CD8-positive, alpha-beta T cell (primary cell): ENCODE measurements at regions of chr12 and their contacts with region 1.

Region 1: DNA sequence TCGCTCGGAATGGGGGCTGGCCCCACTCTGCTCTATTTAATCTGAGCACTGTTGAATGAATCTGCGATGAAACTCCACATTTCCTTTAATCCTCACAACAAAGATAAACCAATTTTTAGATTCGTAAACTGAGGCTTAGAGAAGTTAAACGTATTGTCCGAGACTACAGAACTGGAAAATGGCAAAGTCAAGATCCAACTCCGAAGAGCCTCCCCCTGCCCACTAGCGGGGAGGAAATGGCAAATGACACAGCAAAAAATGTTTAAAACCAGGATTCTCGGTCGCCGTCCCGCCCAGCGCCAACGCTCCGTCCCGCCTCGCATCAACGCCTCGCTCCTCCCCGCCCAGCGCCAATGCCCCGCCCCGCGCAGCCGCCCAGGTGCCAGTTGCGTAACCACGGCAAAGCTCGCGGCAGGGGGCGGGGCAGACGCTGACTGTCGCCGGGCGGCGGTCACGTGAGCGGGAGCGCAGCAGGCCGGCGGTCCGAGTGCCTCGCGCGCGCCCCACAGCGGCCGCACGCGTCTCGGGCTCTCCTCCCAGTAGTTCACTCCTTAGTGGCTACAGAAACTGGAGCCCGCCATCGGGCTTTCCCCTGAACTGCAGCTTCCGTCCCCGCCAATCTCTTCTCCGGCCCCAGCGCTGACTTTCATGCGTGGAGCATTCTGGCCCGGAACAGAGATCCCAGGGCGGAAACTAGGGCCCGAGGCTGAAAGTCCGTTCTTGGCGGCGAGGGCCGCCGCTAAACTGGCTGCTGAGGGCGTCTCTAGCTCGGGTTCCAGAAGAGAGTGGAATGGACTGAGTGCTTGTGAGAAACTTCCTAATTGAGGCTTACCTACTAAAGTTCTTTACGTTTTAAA is 13.6 kb upstream of the LRRC23 start:
- DNase-seq: peak; percentile 97 to 100 (median 99)
- ATAC-seq: peak; percentile 94
- H3K4me3 ChIP-seq: peak overlapping the region; percentile 64 to 70
- H3K4me3 Mint-ChIP-seq: peak overlapping the region; percentile 80
- H3K27ac ChIP-seq: peak overlapping the region; percentile 64 to 97
- H3K27ac Mint-ChIP-seq: peak overlapping the region; percentile 90
- H3K4me1 ChIP-seq: peaks cover 11% of the 10 kb centered on the region
- H3K4me1 Mint-ChIP-seq: peaks cover 16% of the 10 kb centered on the region
- H3K27me3 ChIP-seq: no peaks in the 10 kb centered on the region
- H3K27me3 Mint-ChIP-seq: no peaks in the 10 kb centered on the region
- CTCF ChIP-seq: peak; percentile 86

Region 2: GRCh38 chr12:5328669-5329517 is 1562.1 kb before region 1 on chr12:
- CTCF ChIA-PET with region 1: no interaction called
- POLR2A ChIA-PET with region 1: no interaction called
- intact Hi-C with region 1: no loop called
- DNase-seq: no peak
- ATAC-seq: no peak
- H3K4me3 ChIP-seq: no peak overlapping the region
- H3K4me3 Mint-ChIP-seq: no peak overlapping the region
- H3K27ac ChIP-seq: no peak overlapping the region
- H3K27ac Mint-ChIP-seq: no peak overlapping the region
- H3K4me1 ChIP-seq: no peaks in the 10 kb centered on the region
- H3K4me1 Mint-ChIP-seq: no peaks in the 10 kb centered on the region
- H3K27me3 ChIP-seq: no peaks in the 10 kb centered on the region
- H3K27me3 Mint-ChIP-seq: peaks cover 2% of the 10 kb centered on the region
- CTCF ChIP-seq: no peak

Region 3: GRCh38 chr12:6904280-6905278 is 13.6 kb after region 1 on chr12 and contains the start of gene LRRC23:
- CTCF ChIA-PET with region 1: interaction called, 40 read pairs
- POLR2A ChIA-PET with region 1: interaction called, 7 read pairs
- intact Hi-C with region 1: loop called (anchors 1 kb)
- DNase-seq: peak; percentile 92 to 99 (median 97)
- ATAC-seq: peak; percentile 96
- H3K4me3 ChIP-seq: peak within 1 kb of the TSS; percentile 56 to 64
- H3K4me3 Mint-ChIP-seq: peak within 1 kb of the TSS; percentile 5
- H3K27ac ChIP-seq: peak within 1 kb of the TSS; percentile 86 to 88
- H3K27ac Mint-ChIP-seq: no peak within 1 kb of the TSS
- H3K4me1 ChIP-seq: peaks cover 15% of the 10 kb centered on the region
- H3K4me1 Mint-ChIP-seq: no peaks in the 10 kb centered on the region
- H3K27me3 ChIP-seq: no peaks in the 10 kb centered on the region
- H3K27me3 Mint-ChIP-seq: no peaks in the 10 kb centered on the region
- CTCF ChIP-seq: no peak
- total RNA-seq, gene LRRC23: 6.5 to 7.2 TPM

Region 4: GRCh38 chr12:6914246-6914946 is 23.4 kb after region 1 on chr12 and contains the start of gene ENO2:
- CTCF ChIA-PET with region 1: interaction called, 17 read pairs
- POLR2A ChIA-PET with region 1: interaction called, 6 read pairs
- intact Hi-C with region 1: loop called (anchors 1 kb)
- DNase-seq: peak; percentile 59 to 92 (median 89)
- ATAC-seq: peak; percentile 94
- H3K4me3 ChIP-seq: peak within 1 kb of the TSS; percentile 52 to 83
- H3K4me3 Mint-ChIP-seq: peak within 1 kb of the TSS; percentile 95
- H3K27ac ChIP-seq: peak within 1 kb of the TSS; percentile 77 to 88
- H3K27ac Mint-ChIP-seq: peak within 1 kb of the TSS; percentile 95
- H3K4me1 ChIP-seq: peaks cover 18% of the 10 kb centered on the region
- H3K4me1 Mint-ChIP-seq: peaks cover 31% of the 10 kb centered on the region
- H3K27me3 ChIP-seq: no peaks in the 10 kb centered on the region
- H3K27me3 Mint-ChIP-seq: no peaks in the 10 kb centered on the region
- CTCF ChIP-seq: no peak
- total RNA-seq, gene ENO2: 95.5 to 99.6 TPM

Region 5: GRCh38 chr12:6937481-6938297 is 46.7 kb after region 1 on chr12:
- CTCF ChIA-PET with region 1: interaction called, 5 read pairs
- POLR2A ChIA-PET with region 1: no interaction called
- intact Hi-C with region 1: loop called in 1 of 2 experiments (anchors 1 kb)
- DNase-seq: peak; percentile 84 to 99 (median 92)
- ATAC-seq: peak; percentile 91
- H3K4me3 ChIP-seq: peak overlapping the region; percentile 60 to 91
- H3K4me3 Mint-ChIP-seq: peak overlapping the region; percentile 83
- H3K27ac ChIP-seq: peak overlapping the region; percentile 89 to 91
- H3K27ac Mint-ChIP-seq: peak overlapping the region; percentile 96
- H3K4me1 ChIP-seq: peaks cover 25% of the 10 kb centered on the region
- H3K4me1 Mint-ChIP-seq: peaks cover 48% of the 10 kb centered on the region
- H3K27me3 ChIP-seq: no peaks in the 10 kb centered on the region
- H3K27me3 Mint-ChIP-seq: no peaks in the 10 kb centered on the region
- CTCF ChIP-seq: peak; percentile 90

Region 6: GRCh38 chr12:6944381-6945186 is 53.6 kb after region 1 on chr12:
- CTCF ChIA-PET with region 1: no interaction called
- POLR2A ChIA-PET with region 1: interaction called, 14 read pairs
- intact Hi-C with region 1: no loop called
- DNase-seq: peak; percentile 67 to 94 (median 89)
- ATAC-seq: peak; percentile 51
- H3K4me3 ChIP-seq: peak overlapping the region; percentile 90 to 97
- H3K4me3 Mint-ChIP-seq: peak overlapping the region; percentile 99
- H3K27ac ChIP-seq: peak overlapping the region; percentile 94 to 97
- H3K27ac Mint-ChIP-seq: peak overlapping the region; percentile 100
- H3K4me1 ChIP-seq: peaks cover 56% of the 10 kb centered on the region
- H3K4me1 Mint-ChIP-seq: peaks cover 63% of the 10 kb centered on the region
- H3K27me3 ChIP-seq: no peaks in the 10 kb centered on the region
- H3K27me3 Mint-ChIP-seq: no peaks in the 10 kb centered on the region
- CTCF ChIP-seq: peak; percentile 87